A549 (cell line): ENCODE measurements at regions of chr12 and their contacts with region 1.

Region 1: DNA sequence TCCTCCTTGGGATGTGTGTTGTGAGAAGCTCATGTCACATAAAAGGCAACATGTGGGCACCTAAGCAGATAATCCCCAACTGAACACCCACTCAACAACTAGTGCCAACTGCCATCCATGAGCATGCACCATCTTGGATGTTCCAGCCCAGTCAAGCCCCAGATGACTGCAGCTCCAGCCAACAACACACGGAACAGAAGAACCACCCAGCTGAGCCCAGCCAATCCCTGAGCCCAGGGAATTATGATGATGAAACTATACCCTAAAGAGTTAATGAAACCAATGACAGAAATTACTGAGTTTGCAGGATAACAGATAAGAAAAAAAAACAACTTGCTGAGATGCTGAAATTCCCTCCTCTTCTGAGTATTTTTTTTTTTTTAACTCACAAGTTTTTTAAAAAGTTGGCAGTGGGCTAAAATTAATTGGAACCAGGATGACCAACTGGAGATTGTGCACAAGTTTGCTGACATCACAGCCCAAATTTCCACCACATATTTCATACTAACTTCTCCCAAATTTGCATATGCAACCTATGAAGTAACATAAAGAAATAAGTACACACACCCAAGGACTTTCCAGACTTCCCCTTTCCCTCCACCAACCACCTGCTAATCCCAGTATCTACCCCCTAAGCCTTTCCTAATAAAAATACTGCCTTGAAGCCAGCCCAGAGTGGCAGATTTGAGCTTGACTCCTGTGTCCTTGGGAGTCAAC is 124.5 kb downstream of the KSR2 start:
- DNase-seq: no peak
- ATAC-seq: no peak
- H3K4me3 ChIP-seq: no peak overlapping the region
- H3K27ac ChIP-seq: no peak overlapping the region
- H3K4me1 ChIP-seq: no peaks in the 10 kb centered on the region
- CTCF ChIP-seq: no peak
- EP300 ChIP-seq: no peak
- POLR2A ChIP-seq: no peak
- RAD21 ChIP-seq: no peak

Region 2: GRCh38 chr12:117857632-117858612 is 13.7 kb after region 1 on chr12:
- CTCF ChIA-PET with region 1: interaction called, 14 read pairs
- POLR2A ChIA-PET with region 1: no interaction called
- DNase-seq: peak; percentile 70 to 79
- ATAC-seq: peak; percentile 49 to 64; a peak in 4 of 6 replicates
- H3K4me3 ChIP-seq: no peak overlapping the region
- H3K27ac ChIP-seq: peak overlapping the region; percentile 34 to 44; a peak in 4 of 6 replicates
- H3K4me1 ChIP-seq: peaks cover 29% of the 10 kb centered on the region
- CTCF ChIP-seq: peak; percentile 54
- EP300 ChIP-seq: no peak
- POLR2A ChIP-seq: no peak
- RAD21 ChIP-seq: peak in 1 of 2 experiments; percentile 27; a peak in 1 of 5 replicates